Left colon (tissue), 2 donors: ENCODE measurements at regions of chr14 and their contacts with region 1.

Region 1: GRCh38 chr14:76784266-76785264 is 23.3 kb downstream of the VASH1 start:
- DNase-seq: peak; percentile 56 to 66
- ATAC-seq: peak; percentile 89

Region 2: GRCh38 chr14:76715511-76716081 is 69.0 kb before region 1 on chr14:
- intact Hi-C with region 1: loop called in 1 of 2 experiments (anchors 5 kb)
- DNase-seq: no peak
- ATAC-seq: no peak